H1 (cell line): ENCODE measurements at regions of chr1 and their contacts with region 1.

Region 1: GRCh38 chr1:18635891-18636595 is 5.4 kb downstream of the PAX7 start:
- DNase-seq: peak in 1 of 2 experiments; percentile 78
- H3K4me3 ChIP-seq: peak overlapping the region in 1 of 4 experiments; percentile 52; a peak in 3 of 8 replicates
- H3K27ac ChIP-seq: no peak overlapping the region
- H3K4me1 ChIP-seq: peaks cover 9 to 60% (median 21%) of the 10 kb centered on the region in 4 experiments
- H3K27me3 ChIP-seq: peaks cover 85 to 96% (median 92%) of the 10 kb centered on the region in 4 experiments
- CTCF ChIP-seq: peak; percentile 29 to 44 (median 40)
- EP300 ChIP-seq: no peak
- POLR2A ChIP-seq: no peak
- RAD21 ChIP-seq: no peak; a peak in 1 of 4 replicates

Region 2: DNA sequence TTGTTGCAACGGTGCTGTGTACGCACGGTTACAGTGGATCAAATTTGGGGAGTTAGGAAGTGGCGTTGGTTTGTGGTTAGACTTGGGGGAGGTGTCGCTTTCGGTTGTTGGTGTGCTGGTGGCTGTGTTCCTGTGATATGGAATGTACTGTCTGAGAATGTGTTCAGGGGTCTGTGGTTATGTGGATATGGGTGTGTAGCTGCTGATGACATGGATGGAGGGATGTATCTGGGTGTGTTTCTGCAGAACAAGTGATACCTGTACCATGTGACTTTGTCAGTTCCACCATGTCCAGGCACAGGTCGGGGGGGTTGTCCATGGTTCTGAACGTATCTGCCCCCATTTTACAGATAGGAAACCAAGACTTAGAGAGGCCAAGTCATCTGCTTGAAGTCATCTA is 17.3 kb after region 1 on chr1:
- CTCF ChIA-PET with region 1: interaction called, 19 read pairs
- POLR2A ChIA-PET with region 1: interaction called, 7 read pairs
- DNase-seq: no peak
- H3K4me3 ChIP-seq: no peak overlapping the region
- H3K27ac ChIP-seq: no peak overlapping the region
- H3K4me1 ChIP-seq: peaks cover 28 to 54% (median 44%) of the 10 kb centered on the region in 4 experiments
- H3K27me3 ChIP-seq: peaks cover 37 to 90% (median 82%) of the 10 kb centered on the region in 4 experiments
- CTCF ChIP-seq: no peak
- EP300 ChIP-seq: no peak
- POLR2A ChIP-seq: no peak
- RAD21 ChIP-seq: no peak